ENCODE measurements at regions of chr19 and their contacts with region 1.

Region 1: DNA sequence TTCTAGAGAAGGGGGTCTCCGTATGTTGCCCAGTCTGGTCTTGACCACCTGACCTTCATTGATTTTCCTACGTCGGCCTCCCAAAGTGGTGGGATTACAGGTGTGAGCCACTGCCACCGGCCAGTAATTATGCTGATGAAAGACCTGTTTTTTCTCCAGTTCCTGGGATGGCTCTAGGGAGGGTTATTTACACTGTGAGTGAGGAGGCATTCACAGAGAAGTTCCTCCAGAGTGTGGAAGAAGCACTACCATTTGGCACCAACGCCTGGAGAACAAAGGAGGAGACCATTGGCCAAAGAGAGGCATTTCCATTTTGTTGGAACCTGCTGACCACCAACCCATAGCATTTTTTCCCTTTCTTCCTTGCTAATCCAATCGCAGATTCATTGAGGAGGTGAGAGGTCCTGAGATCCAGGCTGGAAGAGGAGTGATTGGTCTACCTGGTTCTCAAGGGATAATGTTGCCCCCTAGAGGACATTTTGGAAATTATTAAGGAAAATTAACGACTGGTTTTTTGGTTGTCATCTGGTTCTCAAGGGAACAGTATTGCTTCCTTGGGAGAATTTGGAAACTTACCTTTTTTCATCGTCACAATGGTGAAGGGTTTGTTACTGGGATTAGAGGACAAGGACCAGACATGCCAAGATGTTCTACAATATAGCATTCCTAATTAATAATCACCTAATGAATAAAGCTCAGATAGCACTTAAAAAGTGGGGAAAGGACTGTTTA is 5.5 kb upstream of the SAE1 start:
- DNase-seq: no peak
- ATAC-seq: peak; percentile 66
- H3K4me3 Mint-ChIP-seq: no peak overlapping the region
- H3K27ac Mint-ChIP-seq: no peak overlapping the region
- H3K4me1 Mint-ChIP-seq: no peaks in the 10 kb centered on the region
- H3K27me3 Mint-ChIP-seq: no peaks in the 10 kb centered on the region
- CTCF ChIP-seq: peak; percentile 86

Region 2: GRCh38 chr19:47081111-47081510 is 44.0 kb before region 1 on chr19:
- CTCF ChIA-PET with region 1: interaction called, 94 read pairs
- POLR2A ChIA-PET with region 1: interaction called, 3 read pairs
- intact Hi-C with region 1: loop called (anchors 5 kb)
- DNase-seq: no peak
- ATAC-seq: no peak
- H3K4me3 Mint-ChIP-seq: no peak overlapping the region
- H3K27ac Mint-ChIP-seq: peak overlapping the region; percentile 25
- H3K4me1 Mint-ChIP-seq: no peaks in the 10 kb centered on the region
- H3K27me3 Mint-ChIP-seq: no peaks in the 10 kb centered on the region
- CTCF ChIP-seq: no peak